ENCODE measurements at regions of chr13 and their contacts with region 1.

Region 1: GRCh38 chr13:44917589-44918325 is 71.5 kb downstream of the NUFIP1 start:
- H3K4me3 Mint-ChIP-seq: no peak overlapping the region
- H3K27ac Mint-ChIP-seq: no peak overlapping the region
- H3K4me1 Mint-ChIP-seq: no peaks in the 10 kb centered on the region
- H3K27me3 Mint-ChIP-seq: no peaks in the 10 kb centered on the region

Region 2: DNA sequence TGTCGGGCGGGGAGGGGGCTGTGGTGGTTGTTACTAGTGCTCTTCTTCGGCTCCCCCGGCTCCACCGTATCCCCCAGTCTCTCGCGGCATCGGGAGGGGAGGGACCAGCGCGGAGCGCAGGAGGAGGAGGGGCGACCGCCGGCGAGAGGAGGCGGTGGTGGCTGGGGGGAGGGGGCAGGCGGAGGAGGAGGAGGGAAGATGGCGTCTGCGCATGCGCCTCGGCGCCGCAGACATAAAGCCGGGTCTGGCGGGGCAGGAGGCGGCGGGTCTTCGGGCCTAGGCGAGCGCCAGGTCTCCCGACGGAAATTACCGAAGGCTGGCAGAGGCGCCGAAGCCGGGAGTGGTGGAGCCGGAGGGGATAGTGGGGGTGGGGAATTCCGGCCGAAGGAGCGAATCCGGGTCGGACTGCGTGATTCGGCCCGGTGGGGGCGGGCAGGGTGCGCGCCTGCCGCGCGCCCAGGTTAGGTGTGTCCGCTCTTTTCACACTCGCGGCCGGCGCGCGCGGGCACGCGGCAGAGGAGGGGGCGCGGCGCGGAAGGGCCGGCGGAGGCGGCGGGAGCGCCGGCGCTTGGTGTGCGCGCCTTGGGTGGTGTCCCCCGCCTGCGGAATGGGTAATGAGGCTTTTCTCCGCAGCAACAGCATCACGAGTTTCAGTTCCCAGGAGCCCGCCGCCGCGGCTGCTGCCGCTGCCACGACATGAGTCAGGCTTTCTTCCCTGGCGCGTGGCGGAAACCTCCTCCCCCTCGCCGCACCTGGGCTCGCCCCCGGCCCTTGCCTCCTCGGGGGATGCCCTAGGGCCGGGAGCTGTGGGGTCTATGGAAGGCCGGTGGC is 340.3 kb before region 1 on chr13:
- intact Hi-C with region 1: loop called (anchors 5 kb)
- H3K4me3 Mint-ChIP-seq: peak overlapping the region; percentile 83
- H3K27ac Mint-ChIP-seq: peak overlapping the region; percentile 98
- H3K4me1 Mint-ChIP-seq: peaks cover 43% of the 10 kb centered on the region
- H3K27me3 Mint-ChIP-seq: peaks cover 17% of the 10 kb centered on the region

Region 3: DNA sequence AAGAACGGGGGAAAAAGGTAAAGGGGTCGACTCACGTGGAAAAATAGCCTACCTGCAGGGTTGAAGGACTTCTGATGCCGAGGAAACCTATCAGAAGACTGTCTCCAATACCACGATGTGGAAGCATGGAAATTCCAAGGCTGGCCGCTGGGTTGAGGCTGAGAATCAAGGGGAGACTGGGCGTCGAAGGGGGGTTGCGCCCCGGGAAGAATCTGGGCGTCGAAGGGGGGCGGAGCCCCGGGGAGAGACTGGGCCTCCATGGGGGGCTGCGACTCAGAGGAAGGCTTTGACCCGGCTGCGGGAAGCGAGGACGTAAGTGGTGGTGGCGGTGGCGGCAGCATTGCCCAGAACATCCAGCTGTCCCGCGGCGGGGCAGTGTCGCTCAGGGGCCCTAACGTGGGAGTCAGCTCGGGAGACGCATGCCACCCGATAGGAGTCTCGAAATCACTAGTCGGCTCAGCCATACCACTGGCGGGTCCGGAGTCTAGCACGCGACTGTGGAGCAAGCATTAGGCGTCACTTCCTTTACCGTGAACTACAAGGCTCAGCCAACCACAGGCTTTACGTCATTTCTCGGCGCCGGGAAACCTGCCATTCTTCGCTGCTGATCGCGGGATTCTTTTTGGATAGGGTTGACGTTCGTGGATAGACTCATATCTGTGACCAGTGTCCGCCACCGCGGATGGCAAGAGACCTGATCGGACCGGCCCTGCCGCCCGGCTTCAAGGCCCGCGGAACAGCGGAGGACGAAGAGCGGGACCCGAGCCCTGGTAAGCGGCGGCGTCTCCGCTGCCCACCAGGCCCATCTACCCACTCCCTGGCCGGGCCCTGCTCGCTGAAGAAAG is 71.4 kb after region 1 on chr13 and contains the starts of genes GPALPP1 and NUFIP1:
- intact Hi-C with region 1: loop called (anchors 1 kb)
- H3K4me3 Mint-ChIP-seq: peak within 1 kb of the TSS; percentile 95
- H3K27ac Mint-ChIP-seq: peak within 1 kb of the TSS; percentile 96
- H3K4me1 Mint-ChIP-seq: peaks cover 33% of the 10 kb centered on the region
- H3K27me3 Mint-ChIP-seq: no peaks in the 10 kb centered on the region

Region 4: GRCh38 chr13:45219938-45220375 is 302.2 kb after region 1 on chr13:
- intact Hi-C with region 1: no loop called
- H3K4me3 Mint-ChIP-seq: no peak overlapping the region
- H3K27ac Mint-ChIP-seq: peak overlapping the region; percentile 76
- H3K4me1 Mint-ChIP-seq: peaks cover 24% of the 10 kb centered on the region
- H3K27me3 Mint-ChIP-seq: no peaks in the 10 kb centered on the region